ENCODE measurements at regions of chr6 and their contacts with region 1.

Region 1: GRCh38 chr6:130322673-130323268 is 43.0 kb upstream of the TMEM200A start:
- DNase-seq: peak; percentile 62
- H3K4me3 ChIP-seq: no peak overlapping the region
- H3K27ac ChIP-seq: no peak overlapping the region
- H3K4me1 ChIP-seq: no peaks in the 10 kb centered on the region
- CTCF ChIP-seq: peak; percentile 97

Region 2: GRCh38 chr6:130337534-130337933 is 14.8 kb after region 1 on chr6:
- CTCF ChIA-PET with region 1: no interaction called
- POLR2A ChIA-PET with region 1: no interaction called
- intact Hi-C with region 1: no loop called
- DNase-seq: no peak
- H3K4me3 ChIP-seq: no peak overlapping the region
- H3K27ac ChIP-seq: no peak overlapping the region
- H3K4me1 ChIP-seq: no peaks in the 10 kb centered on the region
- CTCF ChIP-seq: no peak

Region 3: GRCh38 chr6:130697995-130698535 is 375.3 kb after region 1 on chr6:
- CTCF ChIA-PET with region 1: no interaction called
- POLR2A ChIA-PET with region 1: no interaction called
- intact Hi-C with region 1: loop called (anchors 2 kb)
- DNase-seq: peak; percentile 31
- H3K4me3 ChIP-seq: no peak overlapping the region
- H3K27ac ChIP-seq: no peak overlapping the region
- H3K4me1 ChIP-seq: no peaks in the 10 kb centered on the region
- CTCF ChIP-seq: peak; percentile 93

Region 4: GRCh38 chr6:130872250-130873095 is 549.7 kb after region 1 on chr6:
- CTCF ChIA-PET with region 1: no interaction called
- POLR2A ChIA-PET with region 1: no interaction called
- intact Hi-C with region 1: loop called (anchors 1 kb)
- DNase-seq: peak; percentile 67
- H3K4me3 ChIP-seq: no peak overlapping the region
- H3K27ac ChIP-seq: no peak overlapping the region
- H3K4me1 ChIP-seq: no peaks in the 10 kb centered on the region
- CTCF ChIP-seq: peak; percentile 99

Region 5: DNA sequence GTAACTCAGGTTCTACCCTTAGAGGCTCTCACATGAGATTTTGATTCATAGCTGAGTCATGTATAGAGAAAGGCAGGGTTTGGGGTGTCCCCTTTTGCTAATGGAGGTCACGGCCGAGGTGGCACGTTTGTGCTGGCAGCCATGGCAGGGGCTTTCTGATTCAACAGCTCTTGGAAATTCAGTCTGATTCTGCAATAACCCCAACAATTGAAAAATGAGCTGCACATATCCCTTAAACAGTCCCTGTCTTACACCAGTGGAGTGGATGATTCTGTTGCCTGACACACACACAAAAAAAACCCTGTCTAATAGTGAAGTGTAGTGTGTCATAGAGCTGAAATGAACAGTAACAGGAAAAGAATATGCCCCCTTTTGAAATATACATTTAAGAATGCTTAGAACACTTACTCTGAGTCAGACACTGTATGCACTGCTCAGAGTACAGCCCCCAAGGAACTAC is 1209.8 kb after region 1 on chr6:
- CTCF ChIA-PET with region 1: no interaction called
- POLR2A ChIA-PET with region 1: no interaction called
- intact Hi-C with region 1: loop called (anchors 10 kb)
- DNase-seq: no peak
- H3K4me3 ChIP-seq: no peak overlapping the region
- H3K27ac ChIP-seq: no peak overlapping the region
- H3K4me1 ChIP-seq: peaks cover 12% of the 10 kb centered on the region
- CTCF ChIP-seq: no peak